Activated naive CD4-positive, alpha-beta T cell treated with anti-CD3 and anti-CD28 coated beads for 36 hours (primary cell): ENCODE measurements at regions of chr10 and their contacts with region 1.

Region 1: DNA sequence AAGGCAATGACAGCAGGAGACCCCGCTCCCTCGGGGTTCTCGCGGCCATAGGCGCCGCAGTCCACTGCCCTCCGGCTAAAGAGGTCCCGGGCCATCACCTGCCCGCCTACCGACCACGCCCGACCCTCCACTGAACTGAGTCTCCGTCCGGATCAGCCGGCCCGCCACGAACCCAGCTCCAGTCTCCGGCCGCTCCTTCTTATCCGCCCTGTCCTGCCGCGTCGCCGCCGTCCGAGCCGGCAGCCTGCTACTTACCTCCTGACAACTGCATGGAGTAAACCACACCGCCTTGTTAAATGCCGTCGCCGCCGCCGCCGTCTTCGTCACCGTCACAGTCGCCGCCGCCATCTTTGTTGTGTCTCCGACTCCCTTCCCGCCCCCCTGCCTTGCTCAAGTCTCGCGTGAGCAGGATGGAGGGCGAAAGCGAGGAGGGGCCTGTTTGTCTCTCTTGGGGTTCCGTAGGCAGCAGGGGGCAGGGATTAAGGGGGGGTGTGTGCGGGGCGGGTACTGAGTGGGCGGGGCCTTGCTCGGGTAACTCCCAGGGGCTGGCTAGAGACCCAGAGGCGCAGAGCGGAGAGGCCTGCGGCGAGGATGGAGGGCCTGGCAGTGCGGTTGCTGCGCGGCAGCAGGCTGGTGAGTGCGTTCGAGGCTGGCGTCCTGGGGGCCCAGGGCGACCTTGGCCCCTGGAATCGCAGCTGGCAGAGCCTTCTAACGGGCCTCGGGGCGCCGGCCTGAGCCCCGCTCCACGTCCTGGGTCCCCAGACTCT is at the starts of genes ACADSB and IKZF5:
- DNase-seq: peak; percentile 98
- H3K4me3 Mint-ChIP-seq: peak within 1 kb of the TSS; percentile 100
- H3K27ac Mint-ChIP-seq: peak within 1 kb of the TSS; percentile 98
- H3K4me1 Mint-ChIP-seq: peaks cover 34% of the 10 kb centered on the region
- H3K27me3 Mint-ChIP-seq: no peaks in the 10 kb centered on the region
- total RNA-seq, gene ACADSB: 19.8 to 21.8 TPM
- total RNA-seq, gene IKZF5: 15.3 to 16.2 TPM

Region 2: DNA sequence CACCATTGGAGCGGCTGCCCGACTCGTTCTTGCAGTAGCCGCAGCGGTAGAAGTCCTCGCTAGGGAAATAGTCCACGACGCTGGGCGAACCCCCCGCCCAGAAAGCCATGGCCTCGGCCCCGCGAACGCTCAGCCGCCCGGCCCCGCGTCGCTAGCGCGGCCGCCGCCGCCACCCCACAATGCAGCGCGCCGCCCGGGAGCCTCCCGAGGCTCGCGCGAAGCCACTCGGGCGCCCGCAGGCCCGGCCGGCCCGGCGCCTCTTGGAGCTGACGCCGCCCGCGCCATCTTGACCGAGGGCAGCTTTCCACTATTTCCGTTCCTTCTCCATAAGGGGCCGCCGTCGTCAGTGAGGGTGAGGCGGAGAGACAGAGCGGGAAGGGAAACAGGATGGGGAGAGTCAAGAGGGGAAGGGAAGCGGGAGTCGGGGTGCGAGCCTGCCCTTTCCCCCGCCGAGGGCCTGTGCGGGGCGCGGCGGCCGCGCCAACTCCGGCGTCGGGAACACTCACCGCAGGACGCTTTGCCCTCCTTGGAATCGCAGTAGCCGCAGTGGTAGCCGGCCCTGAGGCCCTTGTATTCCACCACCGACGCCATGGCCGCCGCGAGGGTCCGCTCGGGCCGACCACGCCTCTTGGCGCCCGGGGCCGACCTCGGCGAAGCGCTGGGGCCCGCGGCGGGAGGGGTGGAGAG is 1080.6 kb before region 1 on chr10 and contains the start of gene ATE1:
- CTCF ChIA-PET with region 1: no interaction called
- intact Hi-C with region 1: loop called (anchors 5 kb)
- DNase-seq: peak; percentile 84
- H3K4me3 Mint-ChIP-seq: peak within 1 kb of the TSS; percentile 89
- H3K27ac Mint-ChIP-seq: peak within 1 kb of the TSS; percentile 94
- H3K4me1 Mint-ChIP-seq: peaks cover 21% of the 10 kb centered on the region
- H3K27me3 Mint-ChIP-seq: no peaks in the 10 kb centered on the region
- total RNA-seq, gene ATE1: 13.6 to 17.5 TPM

Region 3: DNA sequence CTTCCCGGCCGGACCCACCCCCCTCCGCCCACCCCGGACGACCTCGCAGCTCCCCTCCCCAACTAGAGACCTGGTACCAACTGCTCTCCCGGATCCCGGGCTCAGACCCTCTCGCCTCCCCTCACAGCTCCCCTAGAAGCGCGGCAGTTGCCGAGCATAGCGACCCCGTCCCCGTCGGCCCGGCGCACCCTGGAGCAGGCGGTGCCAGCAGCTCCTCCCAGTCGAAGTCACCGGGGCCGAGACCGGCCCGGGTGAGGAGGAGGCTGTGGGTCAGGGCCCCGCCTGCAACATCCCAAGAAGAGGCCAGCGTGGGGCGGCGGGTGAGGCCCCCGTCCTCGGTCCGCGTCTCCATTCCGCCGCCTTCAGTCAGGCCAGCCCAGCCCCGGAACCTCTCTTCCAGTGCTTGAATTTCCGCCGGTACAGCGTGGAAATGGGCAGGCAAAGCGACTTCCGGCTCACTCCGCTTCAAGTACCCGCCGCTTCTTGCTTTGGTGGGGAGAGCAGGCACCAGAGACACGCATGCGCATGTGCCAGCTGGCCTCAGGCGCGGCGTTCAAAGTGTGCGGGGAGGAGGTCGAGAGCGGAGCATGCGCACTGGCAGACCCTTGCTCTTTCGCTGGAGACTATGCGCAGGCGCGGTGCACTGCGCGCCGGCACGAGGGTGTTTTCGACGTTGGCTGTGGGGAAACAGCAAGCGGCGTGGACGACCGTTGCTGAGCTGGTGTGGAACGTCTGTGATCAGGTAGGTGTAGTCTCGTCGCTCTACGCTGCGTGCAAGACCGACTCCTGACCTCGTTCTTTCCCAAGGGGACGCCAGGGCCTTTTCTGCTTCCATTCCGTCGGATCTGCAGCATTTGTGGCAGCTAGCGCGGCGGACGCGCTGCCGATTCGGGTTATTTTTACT is 54.5 kb before region 1 on chr10 and contains the start of gene C10orf88:
- CTCF ChIA-PET with region 1: no interaction called
- intact Hi-C with region 1: loop called (anchors 1 kb)
- DNase-seq: peak; percentile 97
- H3K4me3 Mint-ChIP-seq: peak within 1 kb of the TSS; percentile 81
- H3K27ac Mint-ChIP-seq: peak within 1 kb of the TSS; percentile 82
- H3K4me1 Mint-ChIP-seq: peaks cover 28% of the 10 kb centered on the region
- H3K27me3 Mint-ChIP-seq: no peaks in the 10 kb centered on the region
- total RNA-seq, gene C10orf88: 4.2 to 5.2 TPM

Region 4: DNA sequence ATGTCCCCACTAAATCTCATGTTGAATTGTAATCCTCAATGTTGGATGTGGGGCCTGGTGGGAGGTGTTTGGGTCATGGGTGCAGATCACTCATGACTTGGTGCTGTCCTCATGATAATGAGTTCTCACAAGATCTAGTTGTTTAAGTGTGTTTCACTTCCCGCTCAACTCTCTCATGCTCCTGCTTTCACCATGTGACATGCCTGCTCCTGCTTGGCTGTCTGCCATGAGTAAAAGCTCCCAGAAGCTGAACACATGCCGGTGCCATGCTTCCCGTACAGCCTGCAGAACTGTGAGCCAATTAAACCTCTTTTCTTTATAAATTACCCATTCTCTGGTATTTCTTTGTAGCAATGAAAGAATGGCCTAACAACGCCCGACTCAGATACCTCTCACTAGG is 34.6 kb before region 1 on chr10:
- CTCF ChIA-PET with region 1: no interaction called
- intact Hi-C with region 1: no loop called
- DNase-seq: no peak
- H3K4me3 Mint-ChIP-seq: no peak overlapping the region
- H3K27ac Mint-ChIP-seq: no peak overlapping the region
- H3K4me1 Mint-ChIP-seq: no peaks in the 10 kb centered on the region
- H3K27me3 Mint-ChIP-seq: peaks cover 2% of the 10 kb centered on the region

Region 5: DNA sequence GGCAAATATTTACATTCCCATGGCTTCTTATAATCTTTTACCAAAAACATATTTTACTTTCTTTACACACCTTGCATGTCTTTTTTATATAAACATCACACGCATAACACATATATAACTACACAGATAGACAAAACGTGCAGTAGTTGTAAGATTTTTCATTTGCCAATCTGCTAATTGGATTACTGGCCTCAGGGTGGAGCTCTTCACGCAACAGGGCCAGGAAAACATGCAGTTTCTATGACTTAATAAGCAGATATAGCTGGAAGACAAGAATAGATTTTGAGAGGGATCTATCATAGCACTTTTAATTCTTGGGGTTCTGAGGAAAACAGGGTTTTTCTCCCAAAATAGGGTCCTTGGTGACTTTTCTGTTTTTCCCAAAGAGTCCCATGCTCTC is 12.9 kb after region 1 on chr10:
- CTCF ChIA-PET with region 1: interaction called, 11 read pairs
- intact Hi-C with region 1: no loop called
- DNase-seq: no peak
- H3K4me3 Mint-ChIP-seq: no peak overlapping the region
- H3K27ac Mint-ChIP-seq: no peak overlapping the region
- H3K4me1 Mint-ChIP-seq: peaks cover 1% of the 10 kb centered on the region
- H3K27me3 Mint-ChIP-seq: no peaks in the 10 kb centered on the region

Region 6: DNA sequence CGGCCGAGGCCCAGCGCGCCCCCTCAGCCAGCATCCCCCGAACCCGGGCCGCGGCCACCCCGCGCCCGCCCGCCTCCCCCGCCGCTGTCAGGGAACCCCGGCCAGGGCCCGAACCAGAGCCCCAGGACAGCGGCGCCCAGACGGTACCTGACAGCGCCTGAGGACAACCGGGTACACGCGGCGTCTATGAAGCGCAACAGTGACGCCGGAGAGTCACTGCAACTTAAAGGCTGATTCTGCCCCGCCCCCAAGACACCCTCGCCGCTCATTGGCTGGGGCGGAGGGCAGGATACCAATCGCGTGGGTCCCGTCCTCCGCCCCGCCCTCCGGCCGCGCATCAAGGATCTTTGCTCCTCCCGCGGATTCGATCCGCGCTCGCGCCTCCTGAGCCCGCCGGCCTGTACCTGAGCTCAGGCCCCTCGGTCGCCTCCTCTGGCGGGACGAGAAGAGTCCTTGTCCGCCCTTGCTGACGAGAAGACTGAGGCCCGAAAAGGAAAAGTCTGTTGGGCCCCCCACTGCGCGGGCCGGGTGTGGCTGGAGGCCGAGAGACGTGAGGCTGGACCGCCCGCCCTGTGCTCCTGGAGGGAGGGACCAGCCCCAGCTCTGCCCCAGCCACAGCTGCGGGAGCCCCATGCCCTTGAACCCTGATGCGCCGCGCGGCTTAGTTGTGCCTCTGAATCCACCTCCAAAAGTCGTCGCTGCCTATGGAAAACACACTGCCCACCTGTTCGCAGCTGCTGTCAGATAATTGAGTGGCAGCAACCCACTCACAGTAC is 1410.3 kb after region 1 on chr10 and contains the start of gene OAT:
- CTCF ChIA-PET with region 1: no interaction called
- intact Hi-C with region 1: loop called (anchors 5 kb)
- DNase-seq: peak; percentile 98
- H3K4me3 Mint-ChIP-seq: peak within 1 kb of the TSS; percentile 76
- H3K27ac Mint-ChIP-seq: no peak within 1 kb of the TSS
- H3K4me1 Mint-ChIP-seq: peaks cover 25% of the 10 kb centered on the region
- H3K27me3 Mint-ChIP-seq: no peaks in the 10 kb centered on the region
- total RNA-seq, gene OAT: 37.4 to 41.6 TPM